ENCODE measurements at regions of chr15 and their contacts with region 1.

Region 1: DNA sequence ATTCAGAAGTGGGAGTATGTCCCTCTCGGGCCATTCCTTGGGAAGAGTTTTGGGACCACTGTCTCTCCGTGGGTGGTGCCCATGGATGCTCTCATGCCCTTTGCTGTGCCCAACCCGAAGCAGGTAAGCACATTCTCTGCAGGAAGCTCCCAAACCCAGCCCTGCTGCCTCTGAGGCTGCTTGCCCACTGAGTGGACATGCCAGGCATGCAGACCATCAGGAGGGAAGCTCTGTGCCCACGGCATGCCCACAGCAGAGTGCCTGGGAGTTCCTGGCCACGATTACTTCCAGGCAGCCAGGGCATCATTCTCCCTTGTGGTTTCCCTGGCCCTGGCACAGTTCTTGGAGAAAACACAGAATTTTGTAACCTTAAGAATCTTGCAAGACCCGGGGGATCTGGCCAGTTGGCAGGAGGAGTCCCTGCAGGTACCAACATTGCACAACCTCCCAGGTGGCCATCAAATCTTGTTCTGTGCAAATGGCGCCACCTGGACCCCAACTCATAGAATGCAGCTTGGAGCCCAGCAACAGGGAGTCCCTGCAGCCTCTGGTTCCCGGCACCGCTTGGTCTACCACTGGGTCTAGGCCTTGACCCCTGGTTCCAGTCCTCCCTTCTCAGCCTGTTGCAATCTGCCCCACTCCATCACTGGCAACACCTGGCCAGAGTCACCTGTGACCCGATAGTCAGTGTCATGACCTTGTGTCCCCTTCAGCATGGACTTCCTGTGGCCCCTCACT is 20.4 kb downstream of the FAH start:
- H3K4me3 Mint-ChIP-seq: no peak overlapping the region
- H3K27ac Mint-ChIP-seq: no peak overlapping the region
- H3K4me1 Mint-ChIP-seq: peaks cover 9% of the 10 kb centered on the region
- H3K27me3 Mint-ChIP-seq: no peaks in the 10 kb centered on the region

Region 2: DNA sequence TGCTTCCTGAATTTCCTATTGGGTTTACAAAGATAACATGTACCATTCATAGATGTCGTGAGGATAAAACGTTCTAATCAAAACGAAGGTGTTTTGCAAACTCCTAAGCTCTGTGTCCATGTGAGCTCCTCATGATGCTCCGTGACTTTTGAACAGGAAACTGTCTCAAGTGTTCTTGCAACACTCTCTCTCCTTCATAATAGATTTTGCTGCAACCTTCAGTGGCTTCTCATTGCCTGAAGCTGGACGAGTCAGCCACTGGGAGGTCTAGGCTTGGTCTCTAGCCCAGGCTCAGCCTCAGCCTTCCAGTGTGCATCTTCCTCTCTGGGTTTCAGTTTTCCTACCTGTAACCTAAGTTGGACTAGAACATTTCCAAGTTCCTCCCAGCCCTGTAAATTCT is 183.5 kb before region 1 on chr15:
- intact Hi-C with region 1: loop called (anchors 5 kb)
- H3K4me3 Mint-ChIP-seq: no peak overlapping the region
- H3K27ac Mint-ChIP-seq: no peak overlapping the region
- H3K4me1 Mint-ChIP-seq: peaks cover 31% of the 10 kb centered on the region
- H3K27me3 Mint-ChIP-seq: peaks cover 67% of the 10 kb centered on the region

Region 3: DNA sequence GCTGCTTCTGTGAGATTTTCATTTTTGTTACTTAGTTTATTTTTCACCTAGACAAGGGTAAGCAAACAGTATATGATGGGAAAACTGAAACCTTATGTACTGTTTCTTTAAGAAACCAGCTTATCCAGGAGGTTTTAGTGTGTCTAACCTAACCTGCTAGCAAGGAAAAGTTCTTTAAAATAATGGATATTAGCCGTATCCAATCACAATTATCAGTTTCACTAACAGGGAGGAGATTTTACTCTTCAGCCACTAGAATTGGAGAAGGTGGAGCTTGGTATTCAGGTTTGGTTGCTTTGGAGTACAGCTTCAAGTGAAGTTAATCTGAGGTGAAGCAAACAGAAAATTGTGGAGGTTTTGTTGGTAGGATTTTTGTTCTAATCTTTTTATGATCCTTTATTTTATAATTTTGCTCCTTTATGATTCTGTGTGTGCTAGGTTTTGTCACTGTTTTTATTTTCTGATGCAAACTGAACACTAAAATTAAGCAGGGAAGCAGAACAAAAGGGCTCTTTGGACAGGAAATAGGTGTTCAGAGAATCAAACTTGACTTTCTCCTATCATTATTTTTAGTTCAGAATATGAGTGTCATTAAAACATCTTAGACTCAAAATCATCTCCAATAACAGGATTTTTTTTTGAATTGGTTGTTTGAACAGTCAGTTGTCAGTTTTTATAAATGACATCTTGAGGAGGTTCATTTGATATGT is 100.8 kb before region 1 on chr15:
- intact Hi-C with region 1: loop called (anchors 5 kb)
- H3K4me3 Mint-ChIP-seq: peak overlapping the region; percentile 65
- H3K27ac Mint-ChIP-seq: no peak overlapping the region
- H3K4me1 Mint-ChIP-seq: peaks cover 27% of the 10 kb centered on the region
- H3K27me3 Mint-ChIP-seq: no peaks in the 10 kb centered on the region

Region 4: GRCh38 chr15:80121546-80121945 is 51.6 kb before region 1 on chr15:
- intact Hi-C with region 1: loop called (anchors 10 kb)
- H3K4me3 Mint-ChIP-seq: no peak overlapping the region
- H3K27ac Mint-ChIP-seq: no peak overlapping the region
- H3K4me1 Mint-ChIP-seq: peaks cover 16% of the 10 kb centered on the region
- H3K27me3 Mint-ChIP-seq: no peaks in the 10 kb centered on the region

Measured in dendritic cell treated with granulocyte-macrophage colony-stimulating factor and Interleukin-4, amounts not matched to agents 40 ng/mL and 50 ng/mL, for 4 days (primary cell).